A673 (cell line): ENCODE measurements at regions of chr4 and their contacts with region 1.

Region 1: GRCh38 chr4:124334119-124334518 is 378.4 kb downstream of the ANKRD50 start:
- DNase-seq: peak; percentile 87
- H3K4me3 ChIP-seq: no peak overlapping the region
- H3K27ac ChIP-seq: no peak overlapping the region
- H3K4me1 ChIP-seq: peaks cover 4% of the 10 kb centered on the region
- H3K27me3 ChIP-seq: no peaks in the 10 kb centered on the region
- CTCF ChIP-seq: peak; percentile 68

Region 2: GRCh38 chr4:125244848-125245450 is 910.8 kb after region 1 on chr4:
- CTCF ChIA-PET with region 1: interaction called, 3 read pairs
- POLR2A ChIA-PET with region 1: no interaction called
- intact Hi-C with region 1: loop called (anchors 2 kb)
- DNase-seq: peak; percentile 39
- H3K4me3 ChIP-seq: no peak overlapping the region
- H3K27ac ChIP-seq: no peak overlapping the region
- H3K4me1 ChIP-seq: no peaks in the 10 kb centered on the region
- H3K27me3 ChIP-seq: no peaks in the 10 kb centered on the region
- CTCF ChIP-seq: peak; percentile 56

Region 3: GRCh38 chr4:125283707-125284279 is 949.7 kb after region 1 on chr4:
- CTCF ChIA-PET with region 1: interaction called, 13 read pairs
- POLR2A ChIA-PET with region 1: interaction called, 3 read pairs
- intact Hi-C with region 1: loop called (anchors 1 kb)
- DNase-seq: peak; percentile 46
- H3K4me3 ChIP-seq: no peak overlapping the region
- H3K27ac ChIP-seq: no peak overlapping the region
- H3K4me1 ChIP-seq: no peaks in the 10 kb centered on the region
- H3K27me3 ChIP-seq: no peaks in the 10 kb centered on the region
- CTCF ChIP-seq: peak; percentile 69